ENCODE measurements at regions of chr2 and their contacts with region 1.

Region 1: GRCh38 chr2:171124541-171124940 is 36.2 kb downstream of the TLK1 start:
- DNase-seq: no peak
- ATAC-seq: no peak
- H3K4me3 ChIP-seq: no peak overlapping the region
- H3K4me3 Mint-ChIP-seq: no peak overlapping the region
- H3K27ac ChIP-seq: no peak overlapping the region
- H3K27ac Mint-ChIP-seq: peak overlapping the region in 1 of 9 donors; percentile 53
- H3K4me1 ChIP-seq: peaks cover 2 to 5% of the 10 kb centered on the region in 2 donors
- H3K4me1 Mint-ChIP-seq: peaks cover 15 to 84% (median 73%) of the 10 kb centered on the region in 7 donors
- H3K27me3 ChIP-seq: no peaks in the 10 kb centered on the region
- H3K27me3 Mint-ChIP-seq: no peaks in the 10 kb centered on the region

Region 2: DNA sequence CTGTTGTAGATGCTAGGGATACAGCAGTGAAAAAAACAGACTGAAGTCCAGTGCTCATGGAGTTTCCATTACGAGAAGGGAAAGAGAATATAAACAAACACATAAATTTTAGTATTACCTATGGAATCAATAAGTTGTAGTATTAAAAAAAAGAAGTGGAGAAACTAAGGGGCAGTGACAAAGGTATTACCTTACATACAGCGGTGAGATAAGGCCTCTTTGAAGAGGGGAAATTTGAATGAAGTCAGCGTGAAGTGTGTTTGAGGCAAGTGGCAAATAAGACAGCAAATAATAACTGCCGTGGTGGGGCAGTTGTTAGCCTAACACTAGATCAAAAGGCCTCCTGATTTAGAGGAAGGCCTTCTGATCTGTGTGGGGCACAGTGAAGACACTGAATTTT is 21.7 kb before region 1 on chr2:
- CTCF ChIA-PET with region 1: no interaction called
- POLR2A ChIA-PET with region 1: no interaction called
- intact Hi-C with region 1: loop called in 1 of 2 experiments (anchors 1 kb)
- DNase-seq: peak in 1 of 9 donors; percentile 27
- ATAC-seq: peak; percentile 48
- H3K4me3 ChIP-seq: no peak overlapping the region
- H3K4me3 Mint-ChIP-seq: peak overlapping the region in 7 of 10 donors; percentile 3 to 46 (median 40)
- H3K27ac ChIP-seq: no peak overlapping the region
- H3K27ac Mint-ChIP-seq: peak overlapping the region in 8 of 9 donors; percentile 42 to 84 (median 61)
- H3K4me1 ChIP-seq: peaks cover 0 to 7% of the 10 kb centered on the region in 2 donors
- H3K4me1 Mint-ChIP-seq: peaks cover 14 to 72% (median 56%) of the 10 kb centered on the region in 7 donors
- H3K27me3 ChIP-seq: no peaks in the 10 kb centered on the region
- H3K27me3 Mint-ChIP-seq: no peaks in the 10 kb centered on the region

Region 3: GRCh38 chr2:171141320-171141719 is 16.8 kb after region 1 on chr2:
- CTCF ChIA-PET with region 1: interaction called, 3 read pairs
- POLR2A ChIA-PET with region 1: no interaction called
- intact Hi-C with region 1: loop called in 1 of 2 experiments (anchors 2 kb)
- DNase-seq: no peak
- ATAC-seq: peak; percentile 31
- H3K4me3 ChIP-seq: no peak overlapping the region
- H3K4me3 Mint-ChIP-seq: peak overlapping the region in 7 of 10 donors; percentile 3 to 61 (median 27)
- H3K27ac ChIP-seq: no peak overlapping the region
- H3K27ac Mint-ChIP-seq: peak overlapping the region in 2 of 9 donors; percentile 1 to 86
- H3K4me1 ChIP-seq: peaks cover 9 to 20% of the 10 kb centered on the region in 2 donors
- H3K4me1 Mint-ChIP-seq: peaks cover 37 to 97% (median 75%) of the 10 kb centered on the region in 7 donors
- H3K27me3 ChIP-seq: no peaks in the 10 kb centered on the region
- H3K27me3 Mint-ChIP-seq: no peaks in the 10 kb centered on the region

Region 4: DNA sequence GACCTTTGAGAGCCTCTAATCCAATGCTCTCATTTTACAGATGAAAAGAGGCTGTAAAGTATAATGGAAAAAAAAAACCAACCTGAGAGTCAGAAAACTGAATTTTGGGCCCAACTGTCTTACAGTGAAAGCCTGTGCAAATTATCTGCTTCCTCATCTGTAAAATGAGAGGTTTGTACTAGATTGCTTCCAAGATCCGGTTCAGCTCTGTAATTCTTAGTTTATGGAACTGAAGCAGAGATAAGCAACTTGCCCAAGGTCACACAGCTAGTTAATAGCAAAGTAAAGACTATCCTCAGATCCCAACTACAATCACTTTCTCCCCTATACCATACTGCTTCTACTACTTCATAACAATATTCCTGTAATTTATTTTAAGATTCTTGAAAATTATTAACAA is 29.8 kb after region 1 on chr2:
- CTCF ChIA-PET with region 1: no interaction called
- POLR2A ChIA-PET with region 1: no interaction called
- intact Hi-C with region 1: loop called in 1 of 2 experiments (anchors 2 kb)
- DNase-seq: no peak
- ATAC-seq: no peak
- H3K4me3 ChIP-seq: no peak overlapping the region
- H3K4me3 Mint-ChIP-seq: peak overlapping the region in 7 of 10 donors; percentile 0 to 95 (median 53)
- H3K27ac ChIP-seq: no peak overlapping the region
- H3K27ac Mint-ChIP-seq: peak overlapping the region in 6 of 9 donors; percentile 33 to 65 (median 48)
- H3K4me1 ChIP-seq: peaks cover 28% of the 10 kb centered on the region in 2 donors
- H3K4me1 Mint-ChIP-seq: peaks cover 62 to 97% (median 82%) of the 10 kb centered on the region in 7 donors
- H3K27me3 ChIP-seq: no peaks in the 10 kb centered on the region
- H3K27me3 Mint-ChIP-seq: no peaks in the 10 kb centered on the region

Region 5: DNA sequence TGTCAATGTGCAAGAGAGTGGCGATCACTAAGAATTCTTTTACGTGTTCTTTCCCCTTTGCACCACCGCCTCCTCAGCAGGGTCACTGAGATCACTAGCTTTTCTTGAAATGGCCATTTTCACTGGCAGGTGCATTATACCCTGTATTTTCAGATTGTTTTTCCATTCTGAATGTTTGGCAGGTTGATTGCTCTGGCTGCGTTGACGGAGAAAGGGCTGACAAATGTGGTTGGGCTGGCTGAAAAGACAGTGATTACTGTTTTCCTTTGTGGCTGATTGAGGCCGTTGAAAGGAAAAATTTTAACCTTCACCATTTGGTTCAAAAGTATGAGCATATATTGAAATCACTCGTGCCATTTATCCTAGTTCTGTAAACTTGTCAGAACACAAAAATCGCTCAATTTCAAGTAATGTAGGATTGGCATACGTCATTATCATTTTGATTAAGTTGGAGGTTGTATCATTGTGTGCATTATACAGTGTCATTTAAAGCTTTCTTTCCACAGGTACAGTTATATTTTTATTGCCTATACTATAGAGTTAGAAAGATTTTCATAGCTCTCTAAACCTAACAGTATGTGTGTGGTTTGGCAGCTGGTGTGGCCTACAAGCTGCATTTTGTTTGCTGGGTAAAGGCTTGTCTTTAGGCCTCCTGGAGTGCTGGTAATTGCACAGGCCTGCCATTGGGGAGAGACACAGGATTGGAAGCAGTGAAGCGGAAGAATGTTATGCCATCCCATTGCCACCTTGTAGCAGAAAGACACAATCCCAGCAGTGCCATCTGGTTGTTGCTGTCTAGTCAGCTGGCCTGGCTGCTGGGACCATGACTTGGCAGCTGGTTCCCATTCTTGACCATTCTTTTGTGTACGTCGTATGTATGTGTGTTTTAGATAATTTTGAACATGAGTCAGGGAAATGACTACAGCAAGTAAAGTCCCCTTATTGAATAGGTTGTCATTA is 599.5 kb after region 1 on chr2:
- CTCF ChIA-PET with region 1: no interaction called
- POLR2A ChIA-PET with region 1: no interaction called
- intact Hi-C with region 1: no loop called
- DNase-seq: no peak
- ATAC-seq: no peak
- H3K4me3 ChIP-seq: no peak overlapping the region
- H3K4me3 Mint-ChIP-seq: no peak overlapping the region
- H3K27ac ChIP-seq: no peak overlapping the region
- H3K27ac Mint-ChIP-seq: no peak overlapping the region
- H3K4me1 ChIP-seq: no peaks in the 10 kb centered on the region
- H3K4me1 Mint-ChIP-seq: peaks cover 0 to under 1% (median 0%) of the 10 kb centered on the region in 7 donors
- H3K27me3 ChIP-seq: no peaks in the 10 kb centered on the region
- H3K27me3 Mint-ChIP-seq: no peaks in the 10 kb centered on the region

Measured in naive thymus-derived CD4-positive, alpha-beta T cell (primary cell).